CD4-positive, alpha-beta memory T cell (primary cell): ENCODE measurements at regions of chr12 and their contacts with region 1.

Region 1: GRCh38 chr12:9813821-9814809 is 13.2 kb upstream of the KLRF1 start:
- DNase-seq: peak; percentile 86 to 90 (median 89)
- H3K4me3 ChIP-seq: peak overlapping the region; percentile 54 to 57
- H3K4me3 Mint-ChIP-seq: peak overlapping the region; percentile 81 to 94 (median 86)
- H3K27ac ChIP-seq: peak overlapping the region; percentile 33
- H3K27ac Mint-ChIP-seq: peak overlapping the region in 6 of 7 donors; percentile 32 to 84 (median 68)
- H3K4me1 ChIP-seq: peaks cover 7% of the 10 kb centered on the region
- H3K4me1 Mint-ChIP-seq: peaks cover 4 to 10% (median 8%) of the 10 kb centered on the region in 4 donors
- H3K27me3 ChIP-seq: no peaks in the 10 kb centered on the region
- H3K27me3 Mint-ChIP-seq: peaks cover 12% of the 10 kb centered on the region in 2 donors

Region 2: GRCh38 chr12:9464408-9464807 is 349.7 kb before region 1 on chr12:
- CTCF ChIA-PET with region 1: no interaction called
- POLR2A ChIA-PET with region 1: no interaction called
- intact Hi-C with region 1: no loop called
- DNase-seq: no peak
- H3K4me3 ChIP-seq: no peak overlapping the region
- H3K4me3 Mint-ChIP-seq: no peak overlapping the region
- H3K27ac ChIP-seq: no peak overlapping the region
- H3K27ac Mint-ChIP-seq: no peak overlapping the region
- H3K4me1 ChIP-seq: peaks cover 10% of the 10 kb centered on the region
- H3K4me1 Mint-ChIP-seq: peaks cover 7 to 15% (median 12%) of the 10 kb centered on the region in 4 donors
- H3K27me3 ChIP-seq: no peaks in the 10 kb centered on the region
- H3K27me3 Mint-ChIP-seq: no peaks in the 10 kb centered on the region

Region 3: DNA sequence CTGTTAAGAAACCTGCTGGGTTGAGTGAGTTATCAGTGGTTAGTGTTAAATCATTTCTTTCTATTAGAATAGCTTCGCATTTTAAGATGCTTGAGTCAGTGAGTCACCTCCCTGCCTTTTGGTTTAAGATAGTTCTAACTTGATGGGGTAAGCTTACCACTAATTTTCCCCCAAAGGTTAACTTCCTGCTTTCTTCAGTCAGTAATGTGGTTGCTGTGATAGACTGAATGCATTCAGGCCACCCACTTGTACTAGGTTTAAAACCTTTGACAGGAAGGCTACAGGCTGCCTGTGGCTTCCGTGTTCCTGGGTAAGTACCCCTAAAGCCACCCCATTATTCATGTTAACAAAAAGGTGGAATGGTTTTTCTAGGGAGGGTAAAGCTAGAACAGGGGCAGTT is 92.8 kb after region 1 on chr12:
- CTCF ChIA-PET with region 1: interaction called, 65 read pairs
- POLR2A ChIA-PET with region 1: interaction called, 4 read pairs
- intact Hi-C with region 1: loop called (anchors 1 kb)
- DNase-seq: peak; percentile 42 to 63 (median 54)
- H3K4me3 ChIP-seq: no peak overlapping the region
- H3K4me3 Mint-ChIP-seq: peak overlapping the region in 7 of 8 donors; percentile 18 to 63 (median 47)
- H3K27ac ChIP-seq: no peak overlapping the region
- H3K27ac Mint-ChIP-seq: peak overlapping the region; percentile 18 to 86 (median 76)
- H3K4me1 ChIP-seq: peaks cover 22% of the 10 kb centered on the region
- H3K4me1 Mint-ChIP-seq: peaks cover 18 to 29% (median 25%) of the 10 kb centered on the region in 4 donors
- H3K27me3 ChIP-seq: no peaks in the 10 kb centered on the region
- H3K27me3 Mint-ChIP-seq: no peaks in the 10 kb centered on the region

Region 4: DNA sequence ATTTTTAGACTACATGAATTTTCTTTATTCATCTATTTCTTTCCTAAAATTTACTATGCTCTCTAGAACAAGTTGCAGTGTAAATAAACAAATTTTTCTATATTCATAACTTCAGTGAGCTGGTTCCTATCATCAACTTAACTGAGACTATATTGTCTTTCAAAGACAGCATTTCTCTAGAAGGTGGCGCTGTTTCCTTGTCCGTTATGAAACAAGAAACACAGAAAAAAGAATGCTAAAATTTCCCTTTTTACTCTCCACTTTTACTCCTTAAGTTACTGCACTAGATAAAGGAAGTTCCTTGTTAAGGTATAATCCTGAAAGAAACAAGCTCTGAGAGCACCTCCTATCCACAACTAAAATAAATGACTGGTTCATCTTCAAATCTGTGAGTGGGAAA is 126.3 kb after region 1 on chr12:
- CTCF ChIA-PET with region 1: interaction called, 12 read pairs
- POLR2A ChIA-PET with region 1: no interaction called
- intact Hi-C with region 1: no loop called
- DNase-seq: no peak
- H3K4me3 ChIP-seq: no peak overlapping the region
- H3K4me3 Mint-ChIP-seq: no peak overlapping the region
- H3K27ac ChIP-seq: no peak overlapping the region
- H3K27ac Mint-ChIP-seq: no peak overlapping the region
- H3K4me1 ChIP-seq: no peaks in the 10 kb centered on the region
- H3K4me1 Mint-ChIP-seq: peaks cover 4 to 25% (median 9%) of the 10 kb centered on the region in 4 donors
- H3K27me3 ChIP-seq: no peaks in the 10 kb centered on the region
- H3K27me3 Mint-ChIP-seq: peaks cover 0 to 3% of the 10 kb centered on the region in 2 donors

Region 5: GRCh38 chr12:10140001-10140400 is 325.9 kb after region 1 on chr12:
- CTCF ChIA-PET with region 1: interaction called, 18 read pairs
- POLR2A ChIA-PET with region 1: no interaction called
- intact Hi-C with region 1: loop called (anchors 1 kb)
- DNase-seq: peak; percentile 35 to 53 (median 39)
- H3K4me3 ChIP-seq: no peak overlapping the region
- H3K4me3 Mint-ChIP-seq: no peak overlapping the region
- H3K27ac ChIP-seq: no peak overlapping the region
- H3K27ac Mint-ChIP-seq: no peak overlapping the region
- H3K4me1 ChIP-seq: no peaks in the 10 kb centered on the region
- H3K4me1 Mint-ChIP-seq: no peaks in the 10 kb centered on the region
- H3K27me3 ChIP-seq: no peaks in the 10 kb centered on the region
- H3K27me3 Mint-ChIP-seq: peaks cover 4 to 9% of the 10 kb centered on the region in 2 donors